Activated CD4-positive, alpha-beta memory T cell treated with anti-CD3 and anti-CD28 coated beads for 36 hours (primary cell): ENCODE measurements at regions of chr17 and their contacts with region 1.

Region 1: GRCh38 chr17:31508288-31509094 is 117.0 kb downstream of the RAB11FIP4 start:
- DNase-seq: peak; percentile 82
- H3K4me3 Mint-ChIP-seq: peak overlapping the region; percentile 80
- H3K27ac Mint-ChIP-seq: peak overlapping the region; percentile 99
- H3K4me1 Mint-ChIP-seq: peaks cover 47% of the 10 kb centered on the region
- H3K27me3 Mint-ChIP-seq: no peaks in the 10 kb centered on the region

Region 2: GRCh38 chr17:30363715-30364202 is 1144.7 kb before region 1 on chr17:
- CTCF ChIA-PET with region 1: no interaction called
- POLR2A ChIA-PET with region 1: no interaction called
- intact Hi-C with region 1: loop called (anchors 5 kb)
- DNase-seq: peak; percentile 94
- H3K4me3 Mint-ChIP-seq: peak overlapping the region; percentile 13
- H3K27ac Mint-ChIP-seq: peak overlapping the region; percentile 78
- H3K4me1 Mint-ChIP-seq: peaks cover 28% of the 10 kb centered on the region
- H3K27me3 Mint-ChIP-seq: no peaks in the 10 kb centered on the region

Region 3: DNA sequence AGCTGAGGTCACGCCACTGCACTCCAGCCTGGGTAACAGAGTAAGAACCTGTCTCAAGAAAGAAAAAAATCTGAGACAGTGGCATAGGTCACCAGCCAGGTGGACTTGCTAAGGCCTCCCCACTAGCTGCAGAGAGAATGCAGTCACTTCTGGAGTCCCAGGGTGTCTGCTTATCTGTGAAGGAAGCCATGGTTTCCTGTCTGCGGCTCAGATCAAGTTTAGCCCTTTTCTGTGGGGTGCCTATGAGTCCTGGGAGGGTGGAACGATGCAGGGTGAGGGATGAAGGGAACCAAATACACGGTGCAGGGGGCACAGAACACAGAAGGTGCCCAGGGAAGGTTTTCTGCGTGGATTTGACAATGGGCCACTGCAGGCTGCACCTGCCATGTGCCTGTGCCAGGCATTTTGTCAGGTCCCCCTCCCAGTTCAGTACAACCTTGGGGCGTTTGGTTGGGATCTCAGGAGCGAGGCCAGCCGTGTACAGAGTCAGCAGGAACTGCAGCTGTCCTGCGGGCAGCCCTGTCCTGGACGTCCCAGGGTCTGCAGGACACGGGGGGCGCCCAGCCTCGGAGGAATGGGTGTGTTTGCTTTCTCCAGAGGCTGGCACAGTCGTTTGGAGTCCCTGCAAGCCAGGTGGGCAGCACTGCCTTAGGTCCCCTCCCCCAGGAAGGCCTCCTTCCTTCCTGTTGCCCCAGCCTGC is 75.2 kb before region 1 on chr17:
- CTCF ChIA-PET with region 1: interaction called, 14 read pairs
- POLR2A ChIA-PET with region 1: no interaction called
- intact Hi-C with region 1: no loop called
- DNase-seq: peak; percentile 50
- H3K4me3 Mint-ChIP-seq: no peak overlapping the region
- H3K27ac Mint-ChIP-seq: no peak overlapping the region
- H3K4me1 Mint-ChIP-seq: peaks cover 16% of the 10 kb centered on the region
- H3K27me3 Mint-ChIP-seq: peaks cover 9% of the 10 kb centered on the region

Region 4: GRCh38 chr17:31487648-31488263 is 20.7 kb before region 1 on chr17:
- CTCF ChIA-PET with region 1: interaction called, 36 read pairs
- POLR2A ChIA-PET with region 1: interaction called, 40 read pairs
- intact Hi-C with region 1: no loop called
- DNase-seq: peak; percentile 94
- H3K4me3 Mint-ChIP-seq: peak overlapping the region; percentile 80
- H3K27ac Mint-ChIP-seq: peak overlapping the region; percentile 66
- H3K4me1 Mint-ChIP-seq: peaks cover 48% of the 10 kb centered on the region
- H3K27me3 Mint-ChIP-seq: no peaks in the 10 kb centered on the region

Region 5: GRCh38 chr17:31494259-31495021 is 14.1 kb before region 1 on chr17:
- CTCF ChIA-PET with region 1: interaction called, 36 read pairs
- POLR2A ChIA-PET with region 1: interaction called, 40 read pairs
- intact Hi-C with region 1: loop called (anchors 1 kb)
- DNase-seq: peak; percentile 83
- H3K4me3 Mint-ChIP-seq: peak overlapping the region; percentile 66
- H3K27ac Mint-ChIP-seq: peak overlapping the region; percentile 96
- H3K4me1 Mint-ChIP-seq: peaks cover 88% of the 10 kb centered on the region
- H3K27me3 Mint-ChIP-seq: no peaks in the 10 kb centered on the region